ENCODE measurements at regions of chr4 and their contacts with region 1.

Region 1: DNA sequence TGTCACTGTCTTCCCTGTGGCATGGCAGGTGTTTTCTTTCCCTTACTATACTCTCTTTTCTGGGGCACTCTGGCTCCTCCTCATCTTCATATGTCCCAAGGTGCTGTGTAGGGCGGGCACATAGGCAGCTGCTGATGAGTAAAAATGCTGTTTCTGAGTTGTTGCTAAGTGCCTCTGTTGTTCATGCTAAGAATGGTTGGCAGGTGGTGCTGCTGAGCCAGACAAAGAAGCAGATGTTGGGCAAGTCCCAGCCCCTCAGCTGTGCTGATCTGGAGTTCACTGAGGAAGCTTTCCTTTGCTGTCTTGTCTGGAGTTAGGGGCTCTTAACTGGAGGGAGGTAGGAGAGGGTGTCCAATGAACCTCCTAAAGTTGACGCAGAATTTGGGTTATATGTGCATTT is 40.6 kb downstream of the HADH start:
- DNase-seq: no peak
- ATAC-seq: peak; percentile 99
- H3K4me3 ChIP-seq: no peak overlapping the region
- H3K27ac ChIP-seq: no peak overlapping the region
- H3K4me1 ChIP-seq: no peaks in the 10 kb centered on the region
- H3K27me3 ChIP-seq: no peaks in the 10 kb centered on the region
- CTCF ChIP-seq: peak; percentile 61 to 76 (median 63)
- EP300 ChIP-seq: no peak
- POLR2A ChIP-seq: no peak
- RAD21 ChIP-seq: peak; percentile 96

Region 2: GRCh38 chr4:107888237-107888636 is 142.1 kb before region 1 on chr4:
- CTCF ChIA-PET with region 1: no interaction called
- POLR2A ChIA-PET with region 1: no interaction called
- RAD21 ChIA-PET with region 1: no interaction called
- SMC1A ChIA-PET with region 1: no interaction called
- in situ Hi-C with region 1: no loop called
- intact Hi-C with region 1: no loop called
- DNase-seq: no peak
- ATAC-seq: no peak
- H3K4me3 ChIP-seq: no peak overlapping the region
- H3K27ac ChIP-seq: no peak overlapping the region
- H3K4me1 ChIP-seq: no peaks in the 10 kb centered on the region
- H3K27me3 ChIP-seq: no peaks in the 10 kb centered on the region
- CTCF ChIP-seq: no peak
- EP300 ChIP-seq: no peak
- POLR2A ChIP-seq: no peak
- RAD21 ChIP-seq: no peak

Region 3: DNA sequence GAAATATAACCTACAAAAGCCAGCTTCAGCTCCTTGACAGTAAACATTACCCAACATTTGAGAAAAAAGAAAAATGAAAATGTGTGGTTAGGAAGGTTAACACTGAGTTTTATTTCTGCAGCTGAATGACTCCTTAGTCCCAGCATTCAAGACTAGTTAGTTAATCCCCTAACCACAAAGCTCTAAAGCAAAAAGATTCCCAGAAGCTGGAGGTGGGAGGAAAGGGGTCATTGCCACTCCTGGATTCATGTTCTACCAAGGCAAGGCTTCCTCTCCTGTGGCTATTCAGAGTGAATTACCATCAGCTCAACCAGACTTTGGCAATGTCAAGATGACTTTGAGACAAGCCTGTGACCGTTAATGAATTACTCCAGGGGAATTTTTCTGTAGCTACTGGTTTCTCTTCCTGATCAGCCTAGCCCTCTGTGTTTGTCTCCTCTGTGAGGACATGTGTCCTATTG is 22.9 kb after region 1 on chr4:
- CTCF ChIA-PET with region 1: interaction called, 8 read pairs
- POLR2A ChIA-PET with region 1: interaction called, 5 read pairs
- RAD21 ChIA-PET with region 1: interaction called, 14 read pairs
- SMC1A ChIA-PET with region 1: interaction called, 21 read pairs
- in situ Hi-C with region 1: no loop called
- intact Hi-C with region 1: no loop called
- DNase-seq: no peak
- ATAC-seq: peak; percentile 93
- H3K4me3 ChIP-seq: no peak overlapping the region
- H3K27ac ChIP-seq: no peak overlapping the region
- H3K4me1 ChIP-seq: no peaks in the 10 kb centered on the region
- H3K27me3 ChIP-seq: no peaks in the 10 kb centered on the region
- CTCF ChIP-seq: no peak
- EP300 ChIP-seq: no peak
- POLR2A ChIP-seq: no peak
- RAD21 ChIP-seq: no peak

Region 4: GRCh38 chr4:108099838-108100237 is 69.5 kb after region 1 on chr4:
- CTCF ChIA-PET with region 1: no interaction called
- POLR2A ChIA-PET with region 1: no interaction called
- RAD21 ChIA-PET with region 1: no interaction called
- SMC1A ChIA-PET with region 1: no interaction called
- in situ Hi-C with region 1: no loop called
- intact Hi-C with region 1: no loop called
- DNase-seq: no peak
- ATAC-seq: no peak
- H3K4me3 ChIP-seq: no peak overlapping the region
- H3K27ac ChIP-seq: no peak overlapping the region
- H3K4me1 ChIP-seq: no peaks in the 10 kb centered on the region
- H3K27me3 ChIP-seq: peaks cover 0 to 2% of the 10 kb centered on the region in 2 experiments; a peak in 1 of 4 replicates
- CTCF ChIP-seq: no peak
- EP300 ChIP-seq: no peak
- POLR2A ChIP-seq: no peak
- RAD21 ChIP-seq: no peak

Region 5: DNA sequence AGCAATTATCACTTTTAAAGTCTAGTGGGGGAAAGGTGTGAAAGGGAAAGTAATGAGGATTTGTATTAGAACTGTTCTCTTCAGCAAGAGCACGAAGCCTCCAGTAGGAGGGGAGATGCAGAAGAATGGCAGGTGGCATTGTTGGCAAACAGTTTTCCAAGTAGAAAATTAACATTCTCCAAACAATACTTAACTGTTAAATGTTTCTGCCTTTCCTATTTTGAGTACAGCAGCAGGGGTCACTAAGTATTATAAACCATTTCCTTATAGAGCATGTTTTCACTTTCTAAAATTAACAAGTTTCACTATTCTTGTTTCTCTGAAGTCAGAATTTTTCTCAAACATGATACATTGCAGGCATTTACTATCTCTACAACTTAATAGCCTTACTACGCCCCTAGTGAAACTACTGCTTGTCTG is 79.7 kb after region 1 on chr4:
- CTCF ChIA-PET with region 1: interaction called, 3 read pairs
- POLR2A ChIA-PET with region 1: no interaction called
- RAD21 ChIA-PET with region 1: no interaction called
- SMC1A ChIA-PET with region 1: interaction called, 3 read pairs
- in situ Hi-C with region 1: no loop called
- intact Hi-C with region 1: loop called (anchors 5 kb)
- DNase-seq: peak; percentile 16
- ATAC-seq: peak; percentile 90
- H3K4me3 ChIP-seq: 0 out of 2 replicates have a peak overlapping the region, but pooled peaks have one; percentile 10
- H3K27ac ChIP-seq: no peak overlapping the region
- H3K4me1 ChIP-seq: peaks cover 9% of the 10 kb centered on the region; the same call in 1 of the 2 replicates
- H3K27me3 ChIP-seq: no peaks in the 10 kb centered on the region
- CTCF ChIP-seq: no peak; a peak in 1 of 6 replicates
- EP300 ChIP-seq: no peak
- POLR2A ChIP-seq: no peak
- RAD21 ChIP-seq: peak; percentile 20; the same call in 1 of the 2 replicates

Region 6: GRCh38 chr4:108181704-108182103 is 151.4 kb after region 1 on chr4:
- CTCF ChIA-PET with region 1: interaction called, 19 read pairs
- POLR2A ChIA-PET with region 1: no interaction called
- RAD21 ChIA-PET with region 1: interaction called, 5 read pairs
- SMC1A ChIA-PET with region 1: interaction called, 9 read pairs
- in situ Hi-C with region 1: no loop called
- intact Hi-C with region 1: loop called (anchors 1 kb)
- DNase-seq: no peak
- ATAC-seq: peak; percentile 93
- H3K4me3 ChIP-seq: no peak overlapping the region
- H3K27ac ChIP-seq: no peak overlapping the region
- H3K4me1 ChIP-seq: no peaks in the 10 kb centered on the region
- H3K27me3 ChIP-seq: no peaks in the 10 kb centered on the region; a peak in 2 of 4 replicates
- CTCF ChIP-seq: peak; percentile 38 to 48 (median 46); a peak in 5 of 6 replicates
- EP300 ChIP-seq: no peak
- POLR2A ChIP-seq: no peak
- RAD21 ChIP-seq: peak; percentile 55

Region 7: DNA sequence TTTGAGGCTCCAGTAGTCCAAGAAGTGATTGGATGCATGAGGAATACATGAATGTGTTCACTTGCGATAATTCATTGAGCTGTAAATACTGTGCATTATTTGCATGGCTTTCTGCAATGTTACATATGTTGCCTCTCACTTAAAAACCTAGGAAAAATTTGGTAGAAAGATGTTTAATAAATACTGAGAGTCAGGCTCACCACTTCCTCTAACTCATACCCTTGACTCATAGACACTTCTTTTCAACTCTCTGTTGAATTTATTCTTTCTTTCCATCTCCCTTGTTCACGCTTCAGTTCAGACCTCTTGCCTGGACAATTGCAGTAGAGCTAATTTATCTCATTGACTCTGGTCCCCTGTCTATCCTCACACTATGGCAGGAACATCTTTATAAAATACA is 174.2 kb after region 1 on chr4:
- CTCF ChIA-PET with region 1: no interaction called
- POLR2A ChIA-PET with region 1: no interaction called
- RAD21 ChIA-PET with region 1: no interaction called
- SMC1A ChIA-PET with region 1: no interaction called
- in situ Hi-C with region 1: no loop called
- intact Hi-C with region 1: no loop called
- DNase-seq: no peak
- ATAC-seq: no peak
- H3K4me3 ChIP-seq: no peak overlapping the region
- H3K27ac ChIP-seq: no peak overlapping the region
- H3K4me1 ChIP-seq: no peaks in the 10 kb centered on the region
- H3K27me3 ChIP-seq: no peaks in the 10 kb centered on the region; a peak in 2 of 4 replicates
- CTCF ChIP-seq: no peak
- EP300 ChIP-seq: no peak
- POLR2A ChIP-seq: no peak
- RAD21 ChIP-seq: no peak

Region 8: DNA sequence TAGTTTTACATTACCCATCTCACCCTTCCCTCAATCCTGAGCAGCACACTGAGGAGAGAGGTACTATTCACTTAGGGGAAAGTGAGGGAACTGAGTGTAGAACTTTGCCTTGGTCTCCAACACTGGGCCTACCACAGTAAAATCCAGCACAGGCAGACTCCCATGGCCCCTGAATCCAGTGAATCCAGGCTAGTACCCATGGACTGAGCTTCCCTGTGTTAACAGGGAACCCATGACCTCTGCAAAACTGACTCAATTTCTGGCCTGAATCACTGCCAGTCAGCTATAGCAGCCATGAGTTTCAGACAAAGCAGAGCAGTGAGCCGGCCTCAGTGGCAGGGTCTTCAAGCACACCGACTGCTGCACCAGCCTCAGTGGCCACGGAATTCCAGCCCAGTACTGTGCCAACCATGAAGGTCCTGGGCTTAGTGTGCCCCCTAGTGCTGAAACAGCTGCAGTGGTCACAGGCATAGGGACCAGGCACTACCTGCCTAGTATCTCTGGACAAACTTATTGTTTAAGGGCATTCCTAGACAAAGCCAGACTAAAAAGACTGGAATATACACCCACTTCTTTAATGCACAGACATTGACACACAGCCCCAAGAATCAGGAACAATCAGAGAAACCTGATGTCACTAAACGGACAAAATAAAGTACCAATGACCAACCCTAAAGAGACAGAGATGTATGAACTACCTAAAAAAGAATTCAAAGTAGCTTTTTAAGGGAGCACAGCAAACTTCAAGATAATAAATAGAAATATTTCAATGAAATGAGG is 462.7 kb after region 1 on chr4:
- CTCF ChIA-PET with region 1: no interaction called
- POLR2A ChIA-PET with region 1: no interaction called
- RAD21 ChIA-PET with region 1: interaction called, 3 read pairs
- SMC1A ChIA-PET with region 1: no interaction called
- in situ Hi-C with region 1: loop called (anchors 10 kb)
- intact Hi-C with region 1: loop called (anchors 1 kb)
- DNase-seq: no peak
- ATAC-seq: peak; percentile 95
- H3K4me3 ChIP-seq: no peak overlapping the region
- H3K27ac ChIP-seq: no peak overlapping the region
- H3K4me1 ChIP-seq: no peaks in the 10 kb centered on the region
- H3K27me3 ChIP-seq: no peaks in the 10 kb centered on the region
- CTCF ChIP-seq: peak; percentile 41 to 63 (median 47); a peak in 5 of 6 replicates
- EP300 ChIP-seq: no peak
- POLR2A ChIP-seq: no peak
- RAD21 ChIP-seq: peak; percentile 57

Measured in GM12878 (cell line).